ENCODE measurements at regions of chr19 and their contacts with region 1.

Region 1: GRCh38 chr19:9934132-9934950 is 2.0 kb downstream of the OLFM2 start:
- DNase-seq: peak; percentile 66
- ATAC-seq: peak; percentile 82
- H3K4me3 ChIP-seq: peak overlapping the region in 1 of 2 experiments; percentile 12; a peak in 1 of 4 replicates
- H3K27ac ChIP-seq: peak overlapping the region; percentile 16
- H3K4me1 ChIP-seq: peaks cover 12 to 31% of the 10 kb centered on the region in 2 experiments; a peak in 3 of 4 replicates
- H3K27me3 ChIP-seq: no peaks in the 10 kb centered on the region
- CTCF ChIP-seq: peak; percentile 86 to 95 (median 90)
- POLR2A ChIP-seq: no peak
- RAD21 ChIP-seq: peak; percentile 97

Region 2: DNA sequence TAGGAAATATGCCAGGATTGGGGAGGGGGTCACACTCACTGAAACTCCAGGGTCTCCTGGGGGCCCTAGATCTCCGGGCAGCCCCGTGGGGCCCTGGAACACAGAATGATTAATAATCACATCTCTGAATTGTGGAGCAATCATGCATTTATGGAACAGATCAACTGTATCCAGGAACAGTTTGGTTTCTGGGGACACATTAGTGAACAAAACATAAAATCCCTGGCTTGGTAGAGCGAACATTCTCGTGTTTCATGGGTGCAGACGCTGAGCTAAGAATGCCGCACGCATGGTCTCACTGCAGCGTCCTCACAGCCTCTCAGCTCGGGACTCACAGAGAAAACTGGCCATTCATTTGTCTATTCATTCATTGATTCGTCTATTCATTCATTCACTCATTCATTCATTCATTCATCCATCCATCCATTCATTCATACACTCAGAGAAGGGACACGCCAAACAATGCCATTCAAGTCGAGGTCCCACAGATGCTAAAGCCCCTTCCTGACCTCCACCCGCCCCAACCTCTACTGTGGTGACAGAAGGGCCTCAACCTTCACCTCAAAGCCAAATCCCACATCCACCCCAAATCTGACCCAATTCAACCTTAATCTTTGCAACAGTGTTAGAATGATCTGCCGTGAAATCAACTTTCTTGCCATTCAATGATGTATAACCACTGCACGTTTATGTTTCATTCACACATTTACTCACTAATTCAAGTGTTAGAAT is 37.0 kb after region 1 on chr19:
- CTCF ChIA-PET with region 1: no interaction called
- POLR2A ChIA-PET with region 1: no interaction called
- RAD21 ChIA-PET with region 1: no interaction called
- intact Hi-C with region 1: no loop called
- DNase-seq: no peak
- ATAC-seq: no peak
- H3K4me3 ChIP-seq: no peak overlapping the region
- H3K27ac ChIP-seq: no peak overlapping the region
- H3K4me1 ChIP-seq: no peaks in the 10 kb centered on the region
- H3K27me3 ChIP-seq: no peaks in the 10 kb centered on the region
- CTCF ChIP-seq: no peak
- POLR2A ChIP-seq: no peak
- RAD21 ChIP-seq: no peak

Region 3: GRCh38 chr19:10027158-10027693 is 92.9 kb after region 1 on chr19:
- CTCF ChIA-PET with region 1: interaction called, 27 read pairs
- POLR2A ChIA-PET with region 1: no interaction called
- RAD21 ChIA-PET with region 1: interaction called, 3 to 9 read pairs
- intact Hi-C with region 1: loop called (anchors 1 kb)
- DNase-seq: no peak
- ATAC-seq: peak; percentile 24
- H3K4me3 ChIP-seq: peak overlapping the region; percentile 6 to 24; a peak in 3 of 4 replicates
- H3K27ac ChIP-seq: no peak overlapping the region
- H3K4me1 ChIP-seq: peaks cover 7 to 13% of the 10 kb centered on the region in 2 experiments
- H3K27me3 ChIP-seq: no peaks in the 10 kb centered on the region
- CTCF ChIP-seq: no peak
- POLR2A ChIP-seq: no peak
- RAD21 ChIP-seq: no peak

Region 4: GRCh38 chr19:10112895-10113591 is 178.7 kb after region 1 on chr19:
- CTCF ChIA-PET with region 1: interaction called, 13 read pairs
- POLR2A ChIA-PET with region 1: no interaction called
- RAD21 ChIA-PET with region 1: interaction called in 1 of 2 experiments, 6 read pairs
- intact Hi-C with region 1: loop called (anchors 1 kb)
- DNase-seq: no peak
- ATAC-seq: peak; percentile 70
- H3K4me3 ChIP-seq: no peak overlapping the region
- H3K27ac ChIP-seq: peak overlapping the region; percentile 63
- H3K4me1 ChIP-seq: peaks cover 0 to 36% of the 10 kb centered on the region in 2 experiments; a peak in 2 of 4 replicates
- H3K27me3 ChIP-seq: no peaks in the 10 kb centered on the region
- CTCF ChIP-seq: peak in 2 of 3 experiments; percentile 80 to 86; a peak in 4 of 6 replicates
- POLR2A ChIP-seq: no peak
- RAD21 ChIP-seq: no peak; the same call in 1 of the 2 replicates

Region 5: DNA sequence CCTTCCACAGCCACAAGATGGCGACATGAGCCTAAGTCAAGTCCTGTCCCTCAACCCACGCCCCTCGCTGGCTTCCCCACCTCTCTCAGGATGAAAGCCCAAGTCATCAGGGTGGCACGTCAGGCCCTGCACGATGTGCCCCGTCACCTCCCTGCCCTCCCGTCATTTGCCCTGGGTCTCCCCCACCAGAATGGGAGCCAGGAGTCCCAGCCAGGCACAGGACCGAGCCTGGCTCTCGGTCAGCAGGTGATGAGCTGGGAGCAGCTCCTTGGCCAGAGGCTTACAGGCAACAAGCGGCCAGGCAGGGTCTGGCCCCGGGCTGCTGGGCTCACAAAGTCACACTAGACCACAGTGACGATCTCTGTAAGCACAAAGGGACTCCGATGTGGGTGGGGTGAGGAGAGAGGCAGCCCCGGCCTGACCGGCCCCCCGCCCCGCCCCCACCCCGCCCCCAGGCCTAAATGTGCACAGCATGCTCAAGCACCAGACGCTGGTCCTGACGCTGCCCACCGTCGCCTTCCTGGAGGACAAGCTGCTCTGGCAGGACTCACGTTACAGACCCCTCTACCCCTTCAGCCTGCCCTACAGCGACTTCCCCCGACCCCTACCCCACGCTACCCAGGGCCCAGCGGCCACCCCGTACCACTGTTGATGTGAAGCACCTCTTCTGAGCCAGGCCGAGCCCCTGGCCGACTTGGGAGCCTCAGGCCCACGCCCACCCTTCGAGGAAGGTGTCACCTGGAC is 325.0 kb after region 1 on chr19:
- CTCF ChIA-PET with region 1: interaction called, 10 read pairs
- POLR2A ChIA-PET with region 1: no interaction called
- RAD21 ChIA-PET with region 1: no interaction called
- intact Hi-C with region 1: no loop called
- DNase-seq: peak; percentile 82
- ATAC-seq: peak; percentile 71
- H3K4me3 ChIP-seq: no peak overlapping the region
- H3K27ac ChIP-seq: peak overlapping the region; percentile 56
- H3K4me1 ChIP-seq: peaks cover 24 to 32% of the 10 kb centered on the region in 2 experiments
- H3K27me3 ChIP-seq: no peaks in the 10 kb centered on the region
- CTCF ChIP-seq: peak; percentile 77 to 86 (median 80)
- POLR2A ChIP-seq: no peak
- RAD21 ChIP-seq: peak; percentile 82

Measured in HCT116 (cell line).